Right cardiac atrium (tissue), 5 donors: ENCODE measurements at regions of chr21 and their contacts with region 1.

Region 1: DNA sequence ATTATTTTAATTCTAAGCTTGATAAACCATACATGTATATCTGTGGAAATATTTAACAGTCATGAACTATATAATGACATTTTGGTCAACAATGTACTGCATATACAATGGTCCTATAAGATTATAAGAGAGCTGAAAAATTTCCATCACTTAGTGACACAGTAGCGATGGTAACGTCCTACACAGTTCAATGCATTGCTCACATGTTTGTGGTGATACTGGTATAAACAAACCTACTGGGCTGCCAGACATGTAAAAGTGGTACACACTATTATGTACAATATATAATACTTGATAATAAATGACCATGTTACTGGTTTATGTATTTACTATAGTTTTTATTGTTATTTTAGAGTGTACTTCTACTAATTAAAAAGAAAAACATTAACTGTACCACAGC is 841.9 kb downstream of the LTN1 start:
- DNase-seq: no peak
- ATAC-seq: no peak
- H3K4me3 ChIP-seq: no peak overlapping the region
- H3K27ac ChIP-seq: no peak overlapping the region
- H3K4me1 ChIP-seq: no peaks in the 10 kb centered on the region
- H3K27me3 ChIP-seq: no peaks in the 10 kb centered on the region

Region 2: DNA sequence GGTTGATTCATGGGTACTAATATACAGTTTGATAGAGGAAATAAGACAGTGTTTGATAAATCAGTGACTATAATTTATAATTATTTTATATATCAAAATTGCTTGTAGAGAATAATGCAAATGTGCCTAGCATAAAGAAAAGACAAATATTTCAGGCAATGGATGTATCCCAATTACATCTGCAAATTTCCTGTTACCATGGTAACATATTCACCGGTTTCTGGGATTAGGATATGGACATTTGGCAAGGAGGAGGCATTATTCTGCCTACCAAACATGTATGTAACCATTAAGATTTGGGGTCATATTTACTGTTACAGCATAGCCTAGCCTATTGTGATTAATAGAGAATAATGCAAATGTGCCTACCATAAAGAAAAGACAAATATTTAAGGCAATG is 32.9 kb after region 1 on chr21:
- intact Hi-C with region 1: loop called in 1 of 4 experiments (anchors 1 kb)
- DNase-seq: no peak
- ATAC-seq: no peak
- H3K4me3 ChIP-seq: no peak overlapping the region
- H3K27ac ChIP-seq: no peak overlapping the region
- H3K4me1 ChIP-seq: no peaks in the 10 kb centered on the region
- H3K27me3 ChIP-seq: no peaks in the 10 kb centered on the region

Region 3: DNA sequence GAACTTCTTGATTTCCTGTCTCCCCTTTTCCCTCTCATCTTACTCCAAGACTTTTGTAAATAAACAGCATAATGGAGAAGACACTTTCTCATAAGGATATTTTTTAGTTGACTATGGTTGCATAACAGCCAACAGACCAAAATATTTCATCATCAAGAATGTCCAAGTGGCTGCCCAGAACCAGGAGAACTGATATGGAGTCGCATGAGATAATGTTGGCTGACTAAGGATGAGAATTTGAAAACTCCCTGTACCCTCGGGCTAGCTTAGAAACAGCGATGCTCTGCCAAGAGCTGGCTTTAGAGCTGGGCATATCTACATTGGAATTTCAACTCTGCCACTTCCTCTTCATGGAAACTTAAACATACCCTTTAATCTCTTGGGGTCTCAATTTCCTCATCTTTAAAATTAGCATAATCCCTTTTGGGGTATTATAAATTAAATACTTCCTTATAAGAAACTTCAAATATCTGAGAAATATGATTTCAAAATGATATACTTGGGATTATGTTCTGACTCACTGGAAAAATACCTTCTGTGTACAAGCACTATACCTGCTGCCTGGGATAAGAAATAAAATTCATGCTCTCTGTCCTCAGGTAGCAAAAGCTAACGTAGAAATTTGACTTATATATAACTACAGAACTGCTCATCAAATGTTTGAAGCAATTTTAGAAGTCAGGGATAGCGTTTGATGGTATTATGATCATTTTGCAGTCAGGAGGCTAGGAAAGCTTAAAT is 64.6 kb after region 1 on chr21:
- intact Hi-C with region 1: no loop called
- DNase-seq: peak in 2 of 3 donors; percentile 28 to 61
- ATAC-seq: peak; percentile 96 to 99
- H3K4me3 ChIP-seq: no peak overlapping the region
- H3K27ac ChIP-seq: no peak overlapping the region
- H3K4me1 ChIP-seq: no peaks in the 10 kb centered on the region
- H3K27me3 ChIP-seq: no peaks in the 10 kb centered on the region